H1 (cell line): ENCODE measurements at regions of chr9 and their contacts with region 1.

Region 1: DNA sequence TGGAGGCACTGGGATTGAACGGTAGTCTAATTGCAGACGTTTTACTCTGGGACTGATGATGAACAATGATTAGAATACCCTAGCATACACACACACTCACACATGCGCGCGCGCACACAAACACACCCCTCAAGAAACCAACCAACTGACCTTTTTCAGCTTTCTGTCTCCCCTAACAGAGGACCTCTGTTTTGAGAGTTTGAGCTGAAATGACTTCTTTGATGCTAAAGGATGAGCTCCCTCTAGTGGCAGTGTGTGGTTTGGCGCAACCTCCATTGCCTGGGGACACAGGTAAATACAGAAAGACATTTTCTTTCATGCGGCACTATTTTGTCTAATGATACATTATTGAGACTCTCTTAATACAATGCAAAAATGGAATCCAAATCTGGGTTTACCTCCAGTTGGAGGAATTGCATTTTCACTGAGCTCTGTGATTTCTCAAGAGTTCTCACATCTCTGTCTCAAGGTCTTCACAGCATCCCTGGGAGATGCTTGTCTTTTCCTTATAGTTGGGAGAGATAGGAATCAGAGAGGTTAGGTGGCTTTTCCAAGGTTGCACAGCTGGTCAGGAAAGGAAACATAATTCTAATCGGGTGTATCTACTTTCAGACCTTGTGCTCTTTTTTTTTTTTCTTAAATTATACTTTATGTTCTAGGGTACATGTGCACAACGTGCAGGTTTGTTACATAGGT is 187.5 kb downstream of the TMEM38B start:
- DNase-seq: peak; percentile 54 to 88
- H3K4me3 ChIP-seq: no peak overlapping the region
- H3K27ac ChIP-seq: no peak overlapping the region
- H3K4me1 ChIP-seq: no peaks in the 10 kb centered on the region
- H3K27me3 ChIP-seq: no peaks in the 10 kb centered on the region
- CTCF ChIP-seq: peak; percentile 62 to 91 (median 76)
- EP300 ChIP-seq: no peak
- POLR2A ChIP-seq: no peak
- RAD21 ChIP-seq: peak; percentile 84 to 89

Region 2: GRCh38 chr9:105842023-105842644 is 39.7 kb before region 1 on chr9:
- CTCF ChIA-PET with region 1: interaction called, 129 read pairs
- POLR2A ChIA-PET with region 1: no interaction called
- DNase-seq: no peak
- H3K4me3 ChIP-seq: no peak overlapping the region
- H3K27ac ChIP-seq: no peak overlapping the region
- H3K4me1 ChIP-seq: no peaks in the 10 kb centered on the region
- H3K27me3 ChIP-seq: no peaks in the 10 kb centered on the region
- CTCF ChIP-seq: peak in 2 of 3 experiments; percentile 70 to 73; a peak in 3 of 4 replicates
- EP300 ChIP-seq: no peak
- POLR2A ChIP-seq: no peak
- RAD21 ChIP-seq: peak; percentile 89 to 92

Region 3: DNA sequence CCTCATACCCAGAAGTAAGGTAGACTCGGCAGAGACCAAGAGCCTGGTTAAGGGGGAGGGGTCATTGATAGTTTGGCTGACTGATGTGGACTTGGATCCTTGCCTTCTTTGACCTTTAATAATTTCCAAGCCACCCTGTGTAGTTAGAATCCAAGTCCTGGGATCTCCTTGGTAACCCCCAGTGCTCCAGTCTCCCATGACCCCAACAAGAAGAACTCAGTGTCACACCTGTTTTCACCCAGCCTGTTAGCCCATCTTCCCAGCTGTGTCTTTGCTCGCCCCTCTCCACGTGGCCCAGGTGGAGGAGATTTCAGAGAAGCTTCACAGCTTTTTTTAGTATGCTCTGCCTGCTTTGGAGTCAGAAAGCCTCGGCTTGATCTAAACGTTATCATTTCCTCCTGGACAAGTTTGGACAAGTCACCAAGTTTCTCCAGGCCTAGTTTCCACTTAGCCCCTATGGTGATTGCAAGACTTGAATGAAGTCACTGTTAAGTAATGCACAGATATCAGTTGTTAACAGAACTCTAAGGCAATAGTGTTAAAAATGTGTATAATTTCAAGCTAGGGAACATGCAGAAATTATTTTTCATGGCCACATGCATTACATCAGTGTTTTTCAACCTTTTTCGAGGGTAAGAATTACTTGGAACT is 17.4 kb before region 1 on chr9:
- CTCF ChIA-PET with region 1: interaction called, 11 read pairs
- POLR2A ChIA-PET with region 1: no interaction called
- DNase-seq: no peak
- H3K4me3 ChIP-seq: no peak overlapping the region
- H3K27ac ChIP-seq: no peak overlapping the region
- H3K4me1 ChIP-seq: no peaks in the 10 kb centered on the region
- H3K27me3 ChIP-seq: peaks cover 0 to 1% (median 0%) of the 10 kb centered on the region in 4 experiments; a peak in 1 of 7 replicates
- CTCF ChIP-seq: no peak
- EP300 ChIP-seq: no peak
- POLR2A ChIP-seq: no peak
- RAD21 ChIP-seq: no peak

Region 4: DNA sequence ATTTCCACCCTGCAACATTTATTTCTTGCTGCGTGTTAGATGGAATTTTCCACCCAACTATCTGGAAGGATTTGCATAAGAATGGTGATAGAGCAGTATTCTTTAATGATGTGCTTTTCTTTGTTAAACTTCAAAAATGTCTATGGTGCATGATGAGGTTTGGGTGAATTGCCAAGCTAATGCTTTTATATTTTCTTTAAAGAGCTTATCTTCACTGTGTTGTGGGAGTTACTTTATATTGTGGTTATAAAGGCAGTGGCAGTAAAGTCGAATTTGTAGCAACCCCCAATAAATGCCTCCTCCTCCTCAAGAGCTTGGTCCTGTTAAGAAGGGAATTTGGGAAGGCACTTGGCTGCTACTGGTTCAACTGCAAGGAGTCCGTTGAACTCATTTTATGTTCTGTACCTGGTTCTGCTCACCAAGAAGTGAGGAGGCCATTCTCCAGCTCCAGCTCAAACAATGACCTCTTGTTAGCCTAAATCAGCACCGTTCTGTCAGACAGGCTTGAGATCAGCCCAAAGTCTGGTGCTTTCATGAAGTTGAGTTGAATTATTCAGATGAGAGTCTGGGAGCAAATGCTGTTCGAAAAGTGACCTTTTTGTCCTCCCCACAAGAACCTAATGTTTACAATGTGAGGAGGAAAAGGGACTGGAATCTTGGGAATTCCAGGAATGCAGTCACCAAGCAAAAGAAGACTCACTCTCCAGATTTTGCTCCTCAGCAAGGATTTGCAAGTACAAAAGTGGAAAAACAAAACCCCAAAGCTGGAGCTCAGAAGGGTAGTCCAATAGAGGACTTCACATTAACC is 29.5 kb after region 1 on chr9:
- CTCF ChIA-PET with region 1: interaction called, 10 read pairs
- POLR2A ChIA-PET with region 1: interaction called, 3 read pairs
- DNase-seq: peak in 1 of 2 experiments; percentile 41
- H3K4me3 ChIP-seq: peak overlapping the region in 1 of 4 experiments; percentile 32; a peak in 2 of 8 replicates
- H3K27ac ChIP-seq: peak overlapping the region; percentile 89
- H3K4me1 ChIP-seq: peaks cover 3 to 33% (median 23%) of the 10 kb centered on the region in 4 experiments
- H3K27me3 ChIP-seq: no peaks in the 10 kb centered on the region
- CTCF ChIP-seq: no peak
- EP300 ChIP-seq: no peak
- POLR2A ChIP-seq: no peak
- RAD21 ChIP-seq: no peak

Region 5: DNA sequence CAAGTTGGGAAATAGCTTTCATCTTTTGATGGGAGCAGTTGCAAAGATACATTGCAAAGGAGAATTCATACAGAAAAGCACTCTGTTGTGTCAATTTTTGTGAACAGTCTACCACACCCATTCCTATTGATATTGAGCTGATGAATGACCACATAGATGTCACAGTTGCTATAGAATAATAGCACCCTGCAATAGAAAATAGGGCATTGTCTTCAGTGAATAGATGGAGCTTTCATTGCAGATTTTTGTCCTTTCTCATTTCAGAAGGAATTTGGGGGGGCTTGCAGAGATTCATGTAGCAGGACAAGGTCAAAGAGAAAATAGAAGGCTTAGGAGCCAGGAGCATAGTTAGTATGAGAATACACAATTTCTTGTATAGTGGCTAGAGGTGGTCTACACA is 50.5 kb after region 1 on chr9:
- CTCF ChIA-PET with region 1: no interaction called
- POLR2A ChIA-PET with region 1: no interaction called
- DNase-seq: no peak
- H3K4me3 ChIP-seq: no peak overlapping the region
- H3K27ac ChIP-seq: no peak overlapping the region
- H3K4me1 ChIP-seq: no peaks in the 10 kb centered on the region
- H3K27me3 ChIP-seq: no peaks in the 10 kb centered on the region
- CTCF ChIP-seq: no peak
- EP300 ChIP-seq: no peak
- POLR2A ChIP-seq: no peak
- RAD21 ChIP-seq: no peak